Left ventricle myocardium superior (tissue), 1 donor: ENCODE measurements at regions of chr10 and their contacts with region 1.

Region 1: GRCh38 chr10:124741281-124741921 is 2.8 kb downstream of the FAM53B start:
- DNase-seq: peak; percentile 88
- ATAC-seq: peak; percentile 65

Region 2: GRCh38 chr10:124530215-124530665 is 211.2 kb before region 1 on chr10:
- intact Hi-C with region 1: loop called (anchors 2 kb)
- DNase-seq: peak; percentile 93
- ATAC-seq: peak; percentile 83

Region 3: DNA sequence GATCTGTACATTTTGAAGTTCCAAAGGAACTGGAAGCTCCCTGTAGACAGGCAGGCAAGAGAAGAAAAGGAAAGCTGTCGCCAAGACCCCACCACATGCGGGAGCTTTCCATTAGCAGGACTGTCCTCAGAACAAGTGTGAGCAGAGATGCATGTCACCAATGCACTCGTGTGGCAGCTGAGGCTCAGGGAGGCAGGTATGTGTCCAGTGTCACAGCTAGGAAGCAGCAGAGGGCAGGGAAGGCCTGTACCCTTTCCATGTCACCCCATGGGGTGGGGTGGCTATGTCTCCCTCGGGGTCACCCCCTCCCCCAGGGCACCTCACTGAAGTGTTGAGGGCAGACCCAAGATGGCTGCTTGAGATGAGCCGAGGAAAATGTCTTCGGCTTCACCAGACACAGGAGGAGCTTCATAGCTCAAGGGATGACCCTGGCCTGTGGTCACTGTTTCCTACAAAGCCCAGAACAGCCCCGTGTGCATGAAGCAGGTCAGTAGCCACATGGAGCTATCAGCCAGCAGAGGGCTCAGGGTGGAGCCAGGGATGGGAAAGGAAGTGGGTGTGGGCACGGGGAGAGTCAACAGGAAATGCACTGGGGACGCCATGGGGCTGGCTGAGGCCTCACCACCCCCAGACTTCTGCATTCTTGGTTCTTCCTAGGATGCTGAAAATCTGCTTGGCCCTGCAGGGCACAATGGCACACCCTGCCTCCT is 93.8 kb before region 1 on chr10:
- intact Hi-C with region 1: loop called (anchors 10 kb)
- DNase-seq: peak; percentile 75
- ATAC-seq: peak; percentile 48